Endothelial cell of umbilical vein (primary cell): ENCODE measurements at regions of chr12 and their contacts with region 1.

Region 1: GRCh38 chr12:88241862-88242570 is 99.9 kb downstream of the TMTC3 start:
- DNase-seq: peak; percentile 89
- H3K4me3 ChIP-seq: no peak overlapping the region
- H3K27ac ChIP-seq: peak overlapping the region; percentile 80
- H3K4me1 ChIP-seq: peaks cover 21% of the 10 kb centered on the region
- H3K27me3 ChIP-seq: no peaks in the 10 kb centered on the region
- CTCF ChIP-seq: no peak
- POLR2A ChIP-seq: no peak

Region 2: GRCh38 chr12:88227263-88227662 is 14.8 kb before region 1 on chr12:
- CTCF ChIA-PET with region 1: no interaction called
- POLR2A ChIA-PET with region 1: no interaction called
- dilution Hi-C with region 1: no loop called
- intact Hi-C with region 1: no loop called
- DNase-seq: no peak
- H3K4me3 ChIP-seq: no peak overlapping the region
- H3K27ac ChIP-seq: no peak overlapping the region
- H3K4me1 ChIP-seq: peaks cover 2% of the 10 kb centered on the region
- H3K27me3 ChIP-seq: no peaks in the 10 kb centered on the region
- CTCF ChIP-seq: no peak
- POLR2A ChIP-seq: no peak

Region 3: DNA sequence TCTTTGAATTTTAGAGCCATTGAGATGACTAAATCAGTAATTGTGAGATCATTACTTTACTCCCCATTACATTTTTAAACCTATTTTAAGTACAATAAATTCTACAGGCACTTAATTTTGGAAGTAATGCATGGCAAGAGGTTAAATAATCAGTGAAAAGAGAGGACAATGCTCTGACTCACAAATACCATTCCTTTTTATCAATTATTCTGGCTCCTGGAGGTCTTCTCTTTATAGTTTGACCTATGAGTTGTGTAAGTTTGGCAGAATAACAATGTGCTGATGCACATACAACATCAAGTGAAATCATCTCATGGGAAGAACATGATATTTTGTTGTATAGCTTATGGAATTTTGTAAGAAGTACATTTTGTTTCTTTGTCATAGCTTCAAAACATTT is 66.8 kb after region 1 on chr12:
- CTCF ChIA-PET with region 1: no interaction called
- POLR2A ChIA-PET with region 1: no interaction called
- dilution Hi-C with region 1: no loop called
- intact Hi-C with region 1: loop called (anchors 2 kb)
- DNase-seq: peak; percentile 65
- H3K4me3 ChIP-seq: no peak overlapping the region
- H3K27ac ChIP-seq: peak overlapping the region; percentile 88
- H3K4me1 ChIP-seq: peaks cover 27% of the 10 kb centered on the region
- H3K27me3 ChIP-seq: no peaks in the 10 kb centered on the region
- CTCF ChIP-seq: no peak
- POLR2A ChIP-seq: no peak

Region 4: DNA sequence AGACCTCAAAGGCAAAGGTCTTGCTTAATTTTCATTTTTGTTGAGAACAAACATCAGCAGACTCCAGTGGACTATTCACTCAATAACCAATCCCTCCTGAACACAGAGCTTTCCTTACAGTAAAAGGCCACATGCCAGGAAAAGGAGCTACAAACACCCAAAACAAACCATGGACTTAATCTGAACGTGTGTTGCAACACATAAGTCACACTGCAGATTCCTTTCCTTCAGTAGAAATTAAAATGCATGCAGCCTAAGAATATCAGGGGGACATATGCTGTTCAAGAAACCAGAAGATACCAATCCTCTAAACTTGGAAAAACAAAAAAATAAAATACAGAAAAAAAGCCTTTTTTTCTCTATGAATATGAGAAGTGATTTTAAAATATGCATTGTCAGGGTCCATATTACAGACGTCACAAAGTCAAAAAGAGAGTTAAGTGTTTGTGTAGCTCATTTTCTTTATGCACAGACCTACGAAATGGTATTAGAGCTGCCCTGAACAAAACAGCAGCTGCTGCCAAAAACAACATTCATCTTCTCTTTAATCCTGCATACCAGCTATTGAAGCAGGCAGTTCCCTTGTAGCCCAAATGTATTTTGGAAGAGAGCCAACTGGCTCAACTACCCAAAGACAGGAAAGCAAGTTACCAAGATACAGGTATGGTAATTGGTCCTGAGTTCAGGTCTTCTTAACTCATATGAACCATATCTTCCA is 312.1 kb after region 1 on chr12:
- CTCF ChIA-PET with region 1: no interaction called
- POLR2A ChIA-PET with region 1: no interaction called
- dilution Hi-C with region 1: no loop called
- intact Hi-C with region 1: loop called (anchors 10 kb)
- DNase-seq: peak; percentile 87
- H3K4me3 ChIP-seq: no peak overlapping the region
- H3K27ac ChIP-seq: no peak overlapping the region
- H3K4me1 ChIP-seq: peaks cover 26% of the 10 kb centered on the region
- H3K27me3 ChIP-seq: no peaks in the 10 kb centered on the region
- CTCF ChIP-seq: no peak
- POLR2A ChIP-seq: no peak

Region 5: DNA sequence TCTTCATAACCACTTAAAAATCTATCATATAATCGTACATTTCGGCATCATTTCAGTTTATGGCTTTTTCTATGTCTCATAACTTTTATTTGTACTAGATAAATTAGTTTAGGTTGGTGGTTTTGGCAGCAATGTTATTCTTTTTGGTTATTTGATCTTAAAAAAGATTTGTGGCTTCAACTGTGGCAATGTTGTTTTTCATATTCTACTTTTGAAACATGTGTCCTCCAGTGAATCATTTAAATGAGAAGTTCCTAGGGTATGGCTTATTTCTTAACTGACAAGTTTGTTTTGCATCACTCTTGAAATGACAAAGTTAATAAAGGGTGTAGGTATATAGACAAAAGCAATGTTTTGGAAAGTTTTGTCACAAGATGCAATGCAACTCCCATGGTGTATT is 349.3 kb after region 1 on chr12:
- CTCF ChIA-PET with region 1: no interaction called
- POLR2A ChIA-PET with region 1: no interaction called
- dilution Hi-C with region 1: no loop called
- intact Hi-C with region 1: no loop called
- DNase-seq: no peak
- H3K4me3 ChIP-seq: no peak overlapping the region
- H3K27ac ChIP-seq: no peak overlapping the region
- H3K4me1 ChIP-seq: no peaks in the 10 kb centered on the region
- H3K27me3 ChIP-seq: no peaks in the 10 kb centered on the region
- CTCF ChIP-seq: no peak
- POLR2A ChIP-seq: no peak